Left ventricle myocardium inferior (tissue), 1 donor: ENCODE measurements at regions of chr3 and their contacts with region 1.

Region 1: GRCh38 chr3:71129611-71130431 is 453.7 kb downstream of the FOXP1 start:
- DNase-seq: no peak
- H3K4me3 ChIP-seq: peak overlapping the region; percentile 67
- H3K27ac ChIP-seq: peak overlapping the region; percentile 90
- H3K4me1 ChIP-seq: peaks cover 88% of the 10 kb centered on the region
- H3K27me3 ChIP-seq: no peaks in the 10 kb centered on the region
- CTCF ChIP-seq: no peak

Region 2: DNA sequence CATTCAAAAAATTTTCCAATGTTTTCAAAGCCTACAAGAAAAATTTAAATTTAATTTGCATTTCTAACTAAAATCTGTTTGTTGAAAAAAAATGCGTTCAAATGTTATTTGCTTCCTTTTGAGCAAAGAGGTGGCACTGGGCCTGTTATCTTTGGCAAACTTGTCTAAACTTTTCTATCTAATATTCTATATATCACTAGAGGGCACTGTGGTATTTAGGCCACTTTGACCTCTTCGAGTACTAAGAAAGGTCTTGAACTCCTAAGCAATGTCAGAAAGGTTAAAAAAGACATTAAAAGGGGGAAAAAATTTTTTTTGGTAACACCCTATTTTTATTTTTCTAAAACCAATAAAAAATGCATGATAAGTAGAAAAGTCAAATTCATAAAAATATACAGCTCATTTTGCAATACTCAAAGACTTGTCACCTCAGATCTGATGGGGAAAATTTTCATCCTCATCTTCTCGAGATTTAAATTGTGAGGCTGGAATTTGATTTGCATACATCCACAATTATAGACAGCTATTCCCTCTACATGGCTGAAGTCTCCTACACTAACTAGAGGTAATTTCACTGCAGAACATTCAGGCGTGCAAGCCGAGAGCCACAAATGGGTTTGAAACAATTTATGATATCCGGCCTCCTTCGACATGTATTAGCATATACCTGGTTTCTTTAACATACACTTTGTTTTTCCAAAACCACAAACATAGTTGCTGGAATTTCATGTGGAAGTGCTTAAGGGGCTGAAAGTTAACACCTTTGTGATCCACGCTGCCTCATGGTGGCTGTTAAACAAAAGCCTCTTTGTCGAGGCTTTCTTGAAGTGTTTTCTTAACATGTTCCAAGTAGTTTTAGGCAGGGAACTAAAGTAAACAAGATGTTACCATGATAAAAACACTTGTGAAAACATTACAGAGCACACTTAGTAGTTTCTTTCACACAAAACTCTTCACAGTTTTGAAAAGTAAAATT is 122.7 kb before region 1 on chr3:
- intact Hi-C with region 1: no loop called
- DNase-seq: no peak
- H3K4me3 ChIP-seq: no peak overlapping the region
- H3K27ac ChIP-seq: peak overlapping the region; percentile 45
- H3K4me1 ChIP-seq: peaks cover 58% of the 10 kb centered on the region
- H3K27me3 ChIP-seq: no peaks in the 10 kb centered on the region
- CTCF ChIP-seq: peak; percentile 63

Region 3: DNA sequence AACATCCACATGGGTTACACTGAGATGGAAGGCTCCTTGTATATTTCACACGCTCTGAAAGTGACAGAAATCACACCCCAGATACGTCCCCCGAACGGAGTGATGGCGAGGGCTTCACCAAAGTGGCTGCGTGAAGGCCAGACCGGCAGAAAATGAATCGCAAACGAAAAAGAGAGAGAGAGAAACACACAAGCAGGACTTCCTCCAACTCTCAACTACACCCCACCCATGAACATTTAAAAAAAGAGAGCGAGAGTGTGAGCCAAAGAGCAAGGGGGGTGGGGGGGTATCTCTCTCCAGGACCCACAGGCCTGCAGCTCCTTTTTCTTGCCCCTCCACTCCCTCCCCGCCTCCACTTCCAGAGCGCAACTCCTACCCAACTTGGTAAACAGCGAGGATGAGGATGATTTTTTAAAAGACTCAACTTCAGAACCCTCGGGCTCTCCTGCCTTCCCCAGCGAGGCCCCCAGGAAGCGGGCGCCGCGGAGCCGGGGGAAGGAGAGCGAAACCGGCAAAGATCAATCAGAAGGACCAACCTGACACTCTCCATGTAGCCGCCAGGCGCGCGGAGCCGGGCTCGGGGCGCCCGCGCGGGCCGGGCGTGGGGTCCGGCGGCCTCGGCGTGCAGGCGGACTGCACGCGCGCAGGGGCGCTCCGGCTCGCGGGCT is 65.4 kb before region 1 on chr3:
- intact Hi-C with region 1: loop called (anchors 10 kb)
- DNase-seq: no peak
- H3K4me3 ChIP-seq: peak overlapping the region; percentile 77
- H3K27ac ChIP-seq: peak overlapping the region; percentile 96
- H3K4me1 ChIP-seq: peaks cover 86% of the 10 kb centered on the region
- H3K27me3 ChIP-seq: no peaks in the 10 kb centered on the region
- CTCF ChIP-seq: peak; percentile 18